Esophagus squamous epithelium (tissue), 5 donors: ENCODE measurements at regions of chr17 and their contacts with region 1.

Region 1: GRCh38 chr17:74864866-74865395 is 5.2 kb upstream of the GRIN2C start:
- DNase-seq: no peak
- H3K4me3 ChIP-seq: no peak overlapping the region
- H3K27ac ChIP-seq: no peak overlapping the region
- H3K4me1 ChIP-seq: peaks cover 20 to 29% (median 22%) of the 10 kb centered on the region in 3 donors
- H3K27me3 ChIP-seq: peaks cover 14 to 36% (median 17%) of the 10 kb centered on the region in 4 donors
- CTCF ChIP-seq: peak; percentile 92 to 98 (median 96)
- POLR2A ChIP-seq: no peak

Region 2: GRCh38 chr17:74744714-74745547 is 120.0 kb before region 1 on chr17:
- intact Hi-C with region 1: loop called (anchors 2 kb)
- DNase-seq: peak; percentile 49
- H3K4me3 ChIP-seq: peak overlapping the region in 3 of 4 donors; percentile 12 to 57 (median 29)
- H3K27ac ChIP-seq: peak overlapping the region; percentile 58 to 79 (median 74)
- H3K4me1 ChIP-seq: peaks cover 13 to 78% (median 24%) of the 10 kb centered on the region in 3 donors
- H3K27me3 ChIP-seq: peaks cover 0 to 35% (median 0%) of the 10 kb centered on the region in 4 donors
- CTCF ChIP-seq: peak; percentile 96 to 100 (median 100)
- POLR2A ChIP-seq: no peak

Region 3: GRCh38 chr17:74790161-74791054 is 74.5 kb before region 1 on chr17:
- intact Hi-C with region 1: loop called (anchors 5 kb)
- DNase-seq: no peak
- H3K4me3 ChIP-seq: no peak overlapping the region
- H3K27ac ChIP-seq: peak overlapping the region in 1 of 4 donors; percentile 30
- H3K4me1 ChIP-seq: peaks cover 3 to 32% (median 17%) of the 10 kb centered on the region in 3 donors
- H3K27me3 ChIP-seq: no peaks in the 10 kb centered on the region
- CTCF ChIP-seq: no peak
- POLR2A ChIP-seq: no peak